ENCODE measurements at regions of chrX and their contacts with region 1.

Region 1: GRCh38 chrX:41923257-41923969 is at the start of gene CASK:
- DNase-seq: peak; percentile 65 to 95
- H3K4me3 ChIP-seq: peak within 1 kb of the TSS; percentile 59 to 78
- H3K27ac ChIP-seq: peak within 1 kb of the TSS; percentile 84 to 88
- H3K4me1 ChIP-seq: no peaks in the 10 kb centered on the region
- H3K27me3 ChIP-seq: no peaks in the 10 kb centered on the region
- CTCF ChIP-seq: no peak
- total RNA-seq, gene CASK: 33.7 TPM

Region 2: GRCh38 chrX:41796577-41796976 is 126.8 kb before region 1 on chrX:
- intact Hi-C with region 1: loop called (anchors 10 kb)
- DNase-seq: no peak
- H3K4me3 ChIP-seq: no peak overlapping the region
- H3K27ac ChIP-seq: no peak overlapping the region
- H3K4me1 ChIP-seq: no peaks in the 10 kb centered on the region
- H3K27me3 ChIP-seq: no peaks in the 10 kb centered on the region
- CTCF ChIP-seq: no peak

Region 3: DNA sequence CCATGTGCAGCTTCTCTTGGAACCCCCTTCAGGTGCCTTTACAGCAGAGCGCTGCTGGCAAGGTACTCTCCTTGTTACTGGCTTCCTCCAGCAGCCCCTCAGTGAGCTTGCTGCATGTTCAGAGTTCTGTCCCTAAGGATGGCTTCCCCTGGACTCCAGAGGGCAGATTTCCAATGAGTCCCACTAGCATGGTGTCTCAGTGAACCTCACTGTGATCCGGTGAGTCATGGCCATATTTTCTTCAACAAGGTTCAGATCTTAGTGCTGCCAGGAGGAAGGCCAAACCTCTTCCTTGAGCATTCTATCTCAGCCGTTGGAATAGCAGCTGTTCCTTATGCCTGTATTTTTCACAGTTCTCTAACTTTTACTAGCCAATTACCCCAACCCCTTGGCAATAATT is 98.9 kb before region 1 on chrX:
- intact Hi-C with region 1: loop called (anchors 10 kb)
- DNase-seq: no peak
- H3K4me3 ChIP-seq: no peak overlapping the region
- H3K27ac ChIP-seq: no peak overlapping the region
- H3K4me1 ChIP-seq: peaks cover 0 to 4% of the 10 kb centered on the region in 2 donors
- H3K27me3 ChIP-seq: no peaks in the 10 kb centered on the region
- CTCF ChIP-seq: no peak

Region 4: DNA sequence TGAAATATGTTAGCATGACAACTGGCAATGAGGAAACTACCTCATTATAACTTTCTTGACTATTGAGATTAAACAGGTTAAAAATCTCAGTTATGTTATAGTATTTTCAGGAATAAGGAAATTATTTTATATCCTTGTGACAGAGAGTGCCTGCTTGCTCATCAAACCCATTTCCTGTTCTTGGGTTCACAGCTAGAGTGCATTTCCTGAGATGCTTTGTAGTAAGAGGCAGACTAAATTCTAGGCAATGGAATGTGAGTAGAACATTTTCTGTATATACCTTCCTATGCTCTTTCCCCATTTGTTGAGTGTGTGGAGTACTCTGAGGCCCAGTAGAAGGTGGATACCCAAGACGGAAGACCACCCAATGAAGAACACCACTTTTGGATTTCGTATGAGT is 96.8 kb after region 1 on chrX:
- intact Hi-C with region 1: no loop called
- DNase-seq: no peak
- H3K4me3 ChIP-seq: no peak overlapping the region
- H3K27ac ChIP-seq: no peak overlapping the region
- H3K4me1 ChIP-seq: no peaks in the 10 kb centered on the region
- H3K27me3 ChIP-seq: no peaks in the 10 kb centered on the region
- CTCF ChIP-seq: no peak

Region 5: GRCh38 chrX:42107495-42108488 is 184.4 kb after region 1 on chrX:
- intact Hi-C with region 1: loop called (anchors 10 kb)
- DNase-seq: no peak
- H3K4me3 ChIP-seq: no peak overlapping the region
- H3K27ac ChIP-seq: no peak overlapping the region
- H3K4me1 ChIP-seq: no peaks in the 10 kb centered on the region
- H3K27me3 ChIP-seq: no peaks in the 10 kb centered on the region
- CTCF ChIP-seq: no peak

Region 6: DNA sequence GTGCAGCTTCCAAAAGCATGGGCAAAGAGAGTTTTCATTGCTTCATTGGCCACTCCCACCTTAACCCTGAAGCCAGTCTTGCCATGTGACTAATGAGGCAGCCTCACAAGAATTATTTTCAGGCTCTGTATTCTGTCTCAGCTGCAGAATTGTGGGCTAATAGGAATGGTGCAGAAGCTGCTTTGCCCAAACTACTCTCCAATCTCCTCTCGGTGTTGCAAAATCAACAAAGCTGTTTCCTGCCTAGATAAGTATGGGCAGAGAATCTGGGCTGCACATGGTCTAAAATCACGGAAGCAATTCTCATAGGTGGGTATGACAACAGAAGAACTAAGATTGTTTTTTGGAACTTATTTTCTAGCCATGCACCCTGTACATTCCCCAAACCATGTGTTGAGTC is 823.2 kb after region 1 on chrX:
- intact Hi-C with region 1: loop called (anchors 10 kb)
- DNase-seq: no peak
- H3K4me3 ChIP-seq: no peak overlapping the region
- H3K27ac ChIP-seq: no peak overlapping the region
- H3K4me1 ChIP-seq: no peaks in the 10 kb centered on the region
- H3K27me3 ChIP-seq: no peaks in the 10 kb centered on the region
- CTCF ChIP-seq: no peak

Measured in ascending aorta (tissue), 2 donors.